ENCODE measurements at regions of chr10 and their contacts with region 1.

Region 1: DNA sequence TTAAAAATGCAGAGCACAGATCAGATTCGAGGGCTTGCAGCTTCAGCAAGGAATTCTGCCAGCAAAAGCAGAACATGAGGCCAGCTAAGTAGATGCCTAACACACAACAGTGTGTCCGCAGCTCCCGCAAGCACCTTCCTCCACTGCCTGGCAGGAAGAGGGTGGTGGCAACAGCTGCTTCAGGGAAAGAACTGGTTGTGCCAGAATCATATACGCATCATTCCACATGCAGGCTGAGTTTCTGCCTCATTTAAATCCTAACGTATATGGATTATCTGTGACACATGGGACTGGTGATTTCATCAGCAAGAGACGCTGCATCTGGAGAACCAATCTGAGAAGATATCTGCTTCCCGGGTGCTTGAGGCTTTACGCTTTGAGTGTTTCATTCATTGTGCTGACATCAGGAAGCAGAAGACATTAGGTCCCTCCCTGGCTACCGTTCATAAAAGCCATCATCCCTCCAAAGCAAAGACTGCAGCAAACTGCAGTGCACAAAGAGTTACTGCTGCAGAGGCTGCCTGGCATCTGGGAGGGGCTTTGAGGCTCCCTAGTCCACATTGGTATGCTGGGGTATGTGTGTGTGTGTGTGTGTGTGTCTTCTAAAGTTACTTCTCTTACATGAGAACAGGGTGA is 78.8 kb downstream of the FAM13C start:
- DNase-seq: peak in 7 of 10 donors; percentile 45 to 85 (median 77)
- H3K4me3 ChIP-seq: peak overlapping the region in 56 of 59 donors; percentile 5 to 55 (median 37)
- H3K27ac ChIP-seq: peak overlapping the region in 58 of 59 donors; percentile 68 to 98 (median 92)
- H3K27me3 ChIP-seq: no peaks in the 10 kb centered on the region
- CTCF ChIP-seq: no peak

Region 2: DNA sequence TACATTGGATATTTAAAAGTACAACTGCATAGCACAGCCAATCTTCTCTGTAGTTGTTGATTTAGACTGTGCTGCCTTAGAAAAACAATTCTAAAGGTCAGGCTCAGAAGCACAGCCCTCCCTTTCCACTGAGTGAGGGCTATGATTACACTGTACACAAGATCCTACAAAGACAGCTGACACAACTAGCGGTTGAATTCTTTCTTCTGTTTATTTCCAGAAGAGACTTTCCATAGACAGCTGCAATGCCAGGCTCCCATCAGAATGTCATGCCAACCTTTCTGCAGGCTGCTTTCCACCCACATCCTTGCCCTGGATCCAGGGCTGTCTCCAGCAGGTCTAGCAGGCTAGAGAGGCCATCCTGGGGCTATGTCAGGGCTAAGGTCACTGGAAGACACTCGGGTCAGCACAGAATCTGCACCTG is 39.5 kb after region 1 on chr10:
- intact Hi-C with region 1: loop called in 1 of 2 experiments (anchors 5 kb)
- DNase-seq: no peak
- H3K4me3 ChIP-seq: peak overlapping the region in 1 of 59 donors; percentile 6
- H3K27ac ChIP-seq: peak overlapping the region; percentile 38 to 100 (median 96)
- H3K27me3 ChIP-seq: no peaks in the 10 kb centered on the region
- CTCF ChIP-seq: peak in 2 of 56 donors; percentile 13 to 23

Region 3: DNA sequence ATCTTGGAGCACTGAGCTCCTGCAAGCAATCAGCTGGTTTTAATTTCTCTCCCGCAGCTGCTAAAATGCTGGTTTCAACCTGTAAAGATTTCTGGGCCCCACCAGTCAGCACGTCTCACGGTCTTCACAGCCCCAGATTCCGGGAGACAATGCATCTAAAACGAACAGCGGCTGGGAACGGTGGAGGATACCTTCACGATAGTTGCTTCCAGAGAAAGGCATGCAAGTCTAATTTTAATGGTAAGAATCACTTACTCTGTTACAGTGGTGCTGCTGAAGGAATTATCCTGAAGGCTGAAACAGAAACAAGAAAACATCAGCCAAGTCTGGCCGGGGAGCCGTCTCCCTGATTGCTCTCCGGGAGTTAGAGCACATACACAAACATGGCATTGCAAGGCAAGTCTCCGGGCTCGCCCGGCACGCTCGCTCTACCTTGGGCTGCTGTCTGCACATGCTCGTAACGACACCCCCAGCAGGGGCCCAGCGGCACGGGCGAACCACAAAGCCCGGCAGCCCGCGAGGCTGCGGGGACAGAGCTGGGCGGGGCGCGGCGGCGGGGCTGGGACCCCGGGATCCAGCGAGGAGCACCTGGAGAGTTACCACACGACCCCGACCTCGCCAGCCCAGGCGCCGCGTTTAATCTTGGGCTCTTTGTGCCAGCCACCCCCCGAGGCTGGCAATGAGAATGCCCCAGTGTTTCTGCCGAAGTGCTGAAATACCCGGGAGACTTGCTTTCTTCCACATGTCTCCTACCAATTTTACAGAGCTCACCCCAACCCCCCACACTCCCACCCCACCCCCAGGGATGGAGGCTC is 78.8 kb after region 1 on chr10 and contains the start of gene FAM13C:
- intact Hi-C with region 1: loop called (anchors 5 kb)
- DNase-seq: peak; percentile 71 to 87 (median 83)
- H3K4me3 ChIP-seq: peak within 1 kb of the TSS; percentile 48 to 87 (median 74)
- H3K27ac ChIP-seq: peak within 1 kb of the TSS; percentile 92 to 99 (median 98)
- H3K27me3 ChIP-seq: no peaks in the 10 kb centered on the region
- CTCF ChIP-seq: peak in 14 of 56 donors; percentile 6 to 38 (median 14)
- total RNA-seq, gene FAM13C: 54.6 to 219 (median 93.7) TPM

Region 4: GRCh38 chr10:59735296-59735695 is 451.7 kb after region 1 on chr10:
- intact Hi-C with region 1: no loop called
- DNase-seq: no peak
- H3K4me3 ChIP-seq: no peak overlapping the region
- H3K27ac ChIP-seq: no peak overlapping the region
- H3K27me3 ChIP-seq: no peaks in the 10 kb centered on the region
- CTCF ChIP-seq: no peak

Measured in dorsolateral prefrontal cortex (tissue), 120 donors.